Dorsolateral prefrontal cortex (tissue), 120 donors: ENCODE measurements at regions of chr20 and their contacts with region 1.

Region 1: GRCh38 chr20:63178889-63179686 is 36.8 kb downstream of the YTHDF1 start:
- DNase-seq: peak; percentile 48 to 86 (median 80)
- H3K4me3 ChIP-seq: peak overlapping the region; percentile 29 to 72 (median 59)
- H3K27ac ChIP-seq: peak overlapping the region in 55 of 59 donors; percentile 51 to 96 (median 83)
- H3K27me3 ChIP-seq: peaks cover 0 to 72% (median 49%) of the 10 kb centered on the region in 45 donors
- CTCF ChIP-seq: peak; percentile 32 to 80 (median 65)

Region 2: DNA sequence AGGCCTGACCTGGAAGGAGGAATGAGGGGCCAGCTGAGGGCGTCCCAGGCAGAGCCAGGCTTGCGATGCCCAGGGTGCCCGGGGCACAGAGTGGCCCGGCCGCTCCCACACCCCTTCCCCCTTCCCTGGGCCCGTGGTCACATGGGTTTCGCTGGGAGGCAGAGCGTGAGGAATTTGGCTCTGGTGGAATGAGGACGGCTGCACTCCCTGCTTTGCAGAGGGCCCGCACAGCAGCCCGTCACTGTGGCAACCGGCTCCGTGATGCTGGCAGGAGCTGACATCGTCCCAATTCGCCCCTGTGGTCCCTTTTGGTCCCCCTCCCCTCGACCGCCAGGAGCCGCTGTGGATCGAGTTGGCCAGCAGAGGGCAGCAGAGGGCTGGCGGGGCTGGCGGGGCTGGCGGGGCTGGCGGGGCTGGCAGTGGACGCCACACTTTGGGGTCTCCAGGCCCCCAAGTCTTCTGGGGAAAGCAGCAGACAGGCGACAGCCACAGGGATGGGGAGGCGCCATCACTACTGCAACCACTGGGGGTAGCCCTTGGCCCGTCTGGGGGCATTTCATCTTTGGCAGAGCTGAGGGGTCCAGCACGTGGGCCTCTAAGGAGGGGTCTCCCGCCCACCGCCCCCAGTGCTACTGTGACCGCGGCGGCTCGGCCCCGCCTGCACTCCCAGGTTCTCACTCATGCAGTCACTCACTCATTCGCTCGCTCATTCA is 122.7 kb before region 1 on chr20:
- intact Hi-C with region 1: loop called (anchors 1 to 2 kb)
- DNase-seq: peak in 6 of 10 donors; percentile 26 to 65 (median 49)
- H3K4me3 ChIP-seq: peak overlapping the region in 51 of 59 donors; percentile 1 to 51 (median 36)
- H3K27ac ChIP-seq: peak overlapping the region in 10 of 59 donors; percentile 15 to 71 (median 33)
- H3K27me3 ChIP-seq: peaks cover 0 to 22% (median 3%) of the 10 kb centered on the region in 45 donors
- CTCF ChIP-seq: peak; percentile 73 to 97 (median 91)

Region 3: GRCh38 chr20:63101781-63102719 is 77.0 kb before region 1 on chr20:
- intact Hi-C with region 1: loop called in 1 of 2 experiments (anchors 5 kb)
- DNase-seq: peak in 8 of 10 donors; percentile 32 to 58 (median 46)
- H3K4me3 ChIP-seq: peak overlapping the region; percentile 32 to 82 (median 64)
- H3K27ac ChIP-seq: peak overlapping the region in 45 of 59 donors; percentile 25 to 83 (median 69)
- H3K27me3 ChIP-seq: peaks cover 0 to 54% (median 5%) of the 10 kb centered on the region in 45 donors
- CTCF ChIP-seq: no peak

Region 4: DNA sequence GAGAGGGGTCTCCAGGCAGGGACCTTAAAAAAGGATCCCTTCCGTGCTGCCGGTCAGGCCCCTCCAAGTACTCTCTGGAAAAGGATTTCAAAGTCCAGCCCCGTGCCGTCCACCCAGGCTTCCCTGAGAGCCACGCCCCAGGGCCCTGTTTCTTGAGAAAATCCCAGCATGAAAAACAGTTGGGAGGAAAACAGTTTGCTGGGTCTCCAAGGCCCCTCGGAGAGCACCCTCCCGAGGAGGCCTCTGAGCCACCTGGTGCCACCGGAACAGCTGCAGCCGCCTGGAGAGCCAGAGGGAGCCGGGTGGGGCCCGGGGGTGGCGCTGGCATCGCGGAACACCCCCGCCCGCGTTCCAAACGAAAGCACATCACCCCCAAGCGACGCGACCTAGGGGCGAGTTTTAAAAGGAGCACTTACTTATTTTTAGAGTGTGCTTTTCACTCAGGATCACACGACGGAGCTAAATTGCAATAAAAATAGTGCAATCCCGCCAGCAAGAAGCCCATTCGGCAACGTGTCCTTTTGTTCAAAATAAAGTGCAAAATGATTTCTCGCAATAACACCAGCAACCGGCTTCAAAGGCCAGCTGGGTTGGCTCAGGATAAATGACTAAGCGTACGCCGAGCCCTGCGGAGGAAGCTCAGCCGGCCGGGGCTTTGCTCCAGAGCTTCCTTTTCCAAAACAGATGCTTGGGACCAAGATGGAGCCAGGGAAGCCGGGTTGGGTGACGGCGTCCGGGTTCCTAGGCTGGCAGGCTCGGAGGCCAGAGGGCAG is 27.3 kb before region 1 on chr20:
- intact Hi-C with region 1: no loop called
- DNase-seq: peak in 8 of 10 donors; percentile 26 to 58 (median 52)
- H3K4me3 ChIP-seq: peak overlapping the region in 15 of 59 donors; percentile 1 to 37 (median 12)
- H3K27ac ChIP-seq: peak overlapping the region in 46 of 59 donors; percentile 1 to 83 (median 47)
- H3K27me3 ChIP-seq: peaks cover 0 to 50% (median 13%) of the 10 kb centered on the region in 45 donors
- CTCF ChIP-seq: no peak